ENCODE measurements at regions of chr2 and their contacts with region 1.

Region 1: DNA sequence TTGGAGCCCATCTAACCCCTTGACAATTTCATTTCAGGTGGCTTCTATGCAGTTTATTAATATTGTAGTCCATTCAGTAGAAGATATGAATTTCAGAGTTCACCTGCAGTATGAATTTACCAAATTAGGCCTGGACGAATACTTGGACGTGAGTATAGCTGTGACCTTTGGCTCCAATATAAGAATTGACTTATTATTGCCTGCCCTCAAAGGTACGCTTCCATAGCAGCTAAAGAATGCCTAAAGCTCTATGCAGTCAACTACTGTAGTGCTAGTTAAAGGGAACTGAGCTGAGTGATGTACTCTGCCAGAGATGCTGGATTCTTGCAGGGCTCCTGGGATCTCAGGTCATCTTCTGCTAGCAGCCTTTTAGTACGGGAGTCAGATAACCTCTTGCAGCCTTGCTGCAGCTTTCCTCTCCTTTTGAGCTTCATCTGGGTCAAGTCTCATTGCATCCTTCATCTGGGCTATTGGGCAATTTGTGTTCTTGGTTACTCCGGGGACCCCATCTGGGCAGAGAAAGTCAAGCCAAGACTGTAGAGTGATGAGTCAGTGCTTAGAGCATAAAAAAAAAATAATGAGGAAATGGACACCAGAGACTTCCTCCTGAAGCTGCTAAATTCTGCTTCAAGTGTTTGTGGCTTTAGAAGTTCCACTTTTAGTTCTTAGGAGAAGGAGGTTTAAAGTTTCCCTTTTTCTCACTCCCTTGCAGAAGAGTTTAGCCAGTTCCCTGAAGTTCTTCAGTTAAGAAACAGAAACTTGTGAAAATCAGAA is 105.6 kb downstream of the PRPF40A start:
- DNase-seq: peak; percentile 89 to 97 (median 95)
- H3K4me3 ChIP-seq: peak overlapping the region; percentile 28 to 77 (median 50)
- H3K4me3 Mint-ChIP-seq: peak overlapping the region; percentile 73 to 90
- H3K27ac ChIP-seq: peak overlapping the region; percentile 93 to 98
- H3K27ac Mint-ChIP-seq: peak overlapping the region; percentile 97 to 100 (median 99)
- H3K4me1 ChIP-seq: peaks cover 47 to 54% of the 10 kb centered on the region in 2 donors
- H3K4me1 Mint-ChIP-seq: peaks cover 51% of the 10 kb centered on the region
- H3K27me3 ChIP-seq: no peaks in the 10 kb centered on the region
- H3K27me3 Mint-ChIP-seq: no peaks in the 10 kb centered on the region
- CTCF ChIP-seq: no peak

Region 2: DNA sequence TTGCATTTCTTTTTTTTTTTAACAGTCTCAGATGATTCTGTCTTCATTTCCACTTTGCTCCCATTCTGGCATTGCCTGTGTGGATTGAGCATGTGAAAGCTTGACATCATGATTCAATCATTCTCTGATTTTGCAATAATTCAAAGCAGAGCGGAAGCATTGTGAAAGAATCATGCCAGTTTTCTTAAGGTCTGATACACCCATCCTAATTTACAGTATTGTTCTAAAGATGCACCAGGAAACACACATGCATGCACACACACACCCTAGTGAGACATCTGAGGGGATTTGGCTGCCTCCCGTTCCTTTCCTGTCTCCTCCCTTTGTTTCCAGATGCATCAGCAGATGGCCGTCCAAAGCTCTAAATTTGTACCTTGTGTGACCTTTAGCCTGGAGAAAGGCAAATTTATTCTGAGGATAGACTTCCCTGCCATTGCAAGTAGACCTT is 179.4 kb before region 1 on chr2:
- intact Hi-C with region 1: loop called (anchors 5 to 10 kb)
- DNase-seq: peak; percentile 87 to 97 (median 92)
- H3K4me3 ChIP-seq: peak overlapping the region in 1 of 3 experiments; percentile 43
- H3K4me3 Mint-ChIP-seq: peak overlapping the region in 1 of 2 donors; percentile 44
- H3K27ac ChIP-seq: peak overlapping the region; percentile 35 to 81
- H3K27ac Mint-ChIP-seq: peak overlapping the region; percentile 90 to 98 (median 96)
- H3K4me1 ChIP-seq: peaks cover 30% of the 10 kb centered on the region in 2 donors
- H3K4me1 Mint-ChIP-seq: peaks cover 30% of the 10 kb centered on the region
- H3K27me3 ChIP-seq: no peaks in the 10 kb centered on the region
- H3K27me3 Mint-ChIP-seq: peaks cover 0 to 3% (median 0%) of the 10 kb centered on the region in 3 donors
- CTCF ChIP-seq: no peak

Region 3: DNA sequence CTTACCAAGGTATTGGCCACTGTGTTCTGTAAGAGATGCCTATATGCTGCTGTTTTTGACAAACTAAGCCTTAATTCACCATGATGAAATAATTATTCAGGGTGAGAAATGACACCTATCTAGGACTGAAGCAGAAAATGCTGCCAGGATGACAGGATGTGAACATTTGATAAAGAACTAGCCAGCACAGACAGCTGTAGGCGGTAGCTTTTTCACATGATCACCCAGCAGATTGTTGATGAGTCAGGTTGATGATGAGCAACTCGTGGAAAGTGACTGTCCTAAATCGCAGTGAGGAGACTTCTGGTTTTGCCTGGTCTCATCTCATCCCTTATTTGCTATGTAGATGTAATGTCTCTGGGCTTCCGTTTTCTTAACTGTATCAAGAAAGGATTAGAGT is 38.5 kb before region 1 on chr2:
- intact Hi-C with region 1: loop called in 1 of 2 experiments (anchors 5 kb)
- DNase-seq: peak; percentile 75 to 87 (median 80)
- H3K4me3 ChIP-seq: no peak overlapping the region
- H3K4me3 Mint-ChIP-seq: no peak overlapping the region
- H3K27ac ChIP-seq: no peak overlapping the region
- H3K27ac Mint-ChIP-seq: peak overlapping the region in 2 of 7 donors; percentile 61 to 65
- H3K4me1 ChIP-seq: no peaks in the 10 kb centered on the region
- H3K4me1 Mint-ChIP-seq: peaks cover 11% of the 10 kb centered on the region
- H3K27me3 ChIP-seq: no peaks in the 10 kb centered on the region
- H3K27me3 Mint-ChIP-seq: no peaks in the 10 kb centered on the region
- CTCF ChIP-seq: no peak